Activated naive CD4-positive, alpha-beta T cell treated with anti-CD3 and anti-CD28 coated beads, Interleukin-2, amount 10 ng/mL, durations not matched to agents 7 days and 5 days (primary cell): ENCODE measurements at regions of chr19 and their contacts with region 1.

Region 1: GRCh38 chr19:2236314-2237050 is at the starts of genes PLEKHJ1 and SF3A2:
- DNase-seq: peak; percentile 98
- H3K4me3 Mint-ChIP-seq: peak within 1 kb of the TSS; percentile 98
- H3K27ac Mint-ChIP-seq: peak within 1 kb of the TSS; percentile 98
- H3K4me1 Mint-ChIP-seq: peaks cover 62% of the 10 kb centered on the region
- H3K27me3 Mint-ChIP-seq: peaks cover 4% of the 10 kb centered on the region

Region 2: DNA sequence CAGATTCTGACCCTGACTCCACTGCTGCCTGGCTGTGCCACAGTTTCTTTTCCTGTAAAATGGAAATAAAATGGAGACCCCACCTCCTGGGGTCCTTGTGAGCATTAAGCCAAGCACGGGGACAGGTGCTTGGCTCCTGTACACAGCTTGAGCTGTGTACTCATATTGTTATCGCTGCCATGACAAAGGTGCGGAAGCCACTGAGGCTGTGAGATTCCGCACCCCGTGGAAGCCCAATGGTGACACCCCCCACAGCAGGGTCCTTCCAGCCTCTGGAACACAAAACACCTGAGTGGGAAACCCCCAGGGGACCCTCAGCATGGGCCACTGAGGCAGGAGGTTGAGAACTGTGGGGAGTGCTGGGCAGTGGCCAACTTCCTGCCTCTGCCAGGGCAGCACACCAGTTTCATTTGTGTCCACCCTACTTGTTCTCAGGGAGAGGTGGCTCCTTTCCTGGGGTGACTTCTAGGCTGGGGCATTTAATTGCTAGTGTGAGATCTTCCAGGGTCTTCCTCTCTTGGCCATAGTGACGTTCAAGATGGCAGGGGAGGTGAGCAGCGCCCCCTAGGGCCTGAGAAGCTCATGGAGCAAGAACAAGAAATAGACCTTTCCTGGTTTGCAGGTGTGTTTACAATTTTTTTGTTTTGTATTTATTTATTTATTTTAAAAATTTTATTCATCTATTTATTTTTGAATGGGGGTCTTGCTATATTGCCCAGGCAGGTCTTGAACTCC is 25.1 kb after region 1 on chr19:
- CTCF ChIA-PET with region 1: interaction called, 13 read pairs
- DNase-seq: peak; percentile 75
- H3K4me3 Mint-ChIP-seq: no peak overlapping the region
- H3K27ac Mint-ChIP-seq: no peak overlapping the region
- H3K4me1 Mint-ChIP-seq: peaks cover 41% of the 10 kb centered on the region
- H3K27me3 Mint-ChIP-seq: no peaks in the 10 kb centered on the region